Activated naive CD4-positive, alpha-beta T cell treated with anti-CD3 and anti-CD28 coated beads for 36 hours (primary cell): ENCODE measurements at regions of chr5 and their contacts with region 1.

Region 1: GRCh38 chr5:173065155-173065554 is 9.0 kb downstream of the CREBRF start:
- DNase-seq: no peak
- H3K4me3 Mint-ChIP-seq: peak overlapping the region; percentile 66
- H3K27ac Mint-ChIP-seq: peak overlapping the region; percentile 85
- H3K4me1 Mint-ChIP-seq: peaks cover 83% of the 10 kb centered on the region
- H3K27me3 Mint-ChIP-seq: no peaks in the 10 kb centered on the region

Region 2: DNA sequence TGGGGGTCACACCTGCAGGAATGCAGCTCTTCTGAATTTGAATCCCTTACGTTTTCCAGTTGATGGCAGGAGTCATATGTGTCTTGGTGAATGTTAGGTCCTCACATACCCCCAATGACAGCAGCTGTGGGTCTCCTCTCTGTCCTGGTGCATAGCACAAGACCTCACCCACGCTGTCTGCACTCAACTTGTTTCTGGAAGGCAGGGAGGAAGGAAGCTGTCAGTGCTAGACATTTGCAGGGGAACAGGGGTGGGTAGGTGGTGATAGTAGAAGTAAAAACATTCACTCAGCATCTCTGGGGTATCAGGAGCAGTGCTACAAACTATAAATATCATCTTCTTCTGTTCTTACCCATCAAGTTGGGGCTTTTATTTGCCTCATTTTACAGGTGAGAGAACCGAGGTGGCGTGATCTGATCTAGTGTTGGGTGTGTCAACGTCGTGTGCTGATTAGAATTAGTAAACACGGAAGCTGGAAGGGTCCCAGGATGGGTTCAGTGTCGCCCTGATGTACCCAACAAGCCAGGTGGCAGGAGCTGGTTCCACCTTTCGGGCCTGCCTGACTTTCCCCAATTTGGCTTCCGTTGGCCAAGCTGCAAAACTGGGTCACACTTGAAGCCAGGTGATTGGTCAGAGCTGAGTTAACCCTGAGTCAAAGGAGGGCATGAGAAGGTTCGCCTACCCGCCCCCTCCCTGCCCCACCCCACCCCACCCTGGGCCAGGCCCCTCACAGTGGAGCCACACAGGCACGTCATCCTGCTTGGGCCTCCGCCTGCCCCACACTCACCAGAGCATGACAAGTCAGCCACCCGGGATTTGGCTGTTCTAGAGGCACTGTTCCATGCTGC is 215.3 kb before region 1 on chr5:
- CTCF ChIA-PET with region 1: no interaction called
- intact Hi-C with region 1: no loop called
- DNase-seq: no peak
- H3K4me3 Mint-ChIP-seq: no peak overlapping the region
- H3K27ac Mint-ChIP-seq: no peak overlapping the region
- H3K4me1 Mint-ChIP-seq: peaks cover 34% of the 10 kb centered on the region
- H3K27me3 Mint-ChIP-seq: no peaks in the 10 kb centered on the region

Region 3: DNA sequence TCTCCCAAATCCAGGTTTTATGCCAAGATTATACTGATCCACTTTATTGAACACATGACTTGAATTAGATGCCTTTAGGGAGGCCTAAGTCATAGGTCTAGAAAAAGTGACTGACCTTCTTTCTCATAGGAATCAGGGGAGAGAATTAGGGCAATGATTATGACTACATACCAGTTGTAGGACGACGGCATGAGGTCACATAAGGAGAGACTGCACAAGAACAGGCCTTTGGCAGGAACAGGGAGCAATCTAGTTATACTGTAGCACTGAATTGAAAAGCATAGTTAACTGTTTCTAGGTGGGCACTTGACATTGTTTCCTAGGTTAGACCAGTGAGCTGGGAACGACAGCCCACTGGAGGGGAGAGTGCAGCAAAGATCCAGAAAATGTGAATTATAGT is 13.7 kb after region 1 on chr5:
- CTCF ChIA-PET with region 1: no interaction called
- intact Hi-C with region 1: no loop called
- DNase-seq: no peak
- H3K4me3 Mint-ChIP-seq: no peak overlapping the region
- H3K27ac Mint-ChIP-seq: no peak overlapping the region
- H3K4me1 Mint-ChIP-seq: peaks cover 50% of the 10 kb centered on the region
- H3K27me3 Mint-ChIP-seq: no peaks in the 10 kb centered on the region

Region 4: GRCh38 chr5:173093597-173093996 is 28.4 kb after region 1 on chr5:
- CTCF ChIA-PET with region 1: interaction called, 3 read pairs
- intact Hi-C with region 1: loop called (anchors 2 kb)
- DNase-seq: no peak
- H3K4me3 Mint-ChIP-seq: no peak overlapping the region
- H3K27ac Mint-ChIP-seq: no peak overlapping the region
- H3K4me1 Mint-ChIP-seq: peaks cover 51% of the 10 kb centered on the region
- H3K27me3 Mint-ChIP-seq: no peaks in the 10 kb centered on the region